PC-9 (cell line): ENCODE measurements at regions of chr3 and their contacts with region 1.

Region 1: GRCh38 chr3:182713743-182714517 is 79.4 kb upstream of the ATP11B start:
- DNase-seq: peak; percentile 24 to 86
- H3K4me3 ChIP-seq: no peak overlapping the region
- H3K27ac ChIP-seq: no peak overlapping the region
- H3K4me1 ChIP-seq: peaks cover 24% of the 10 kb centered on the region
- H3K27me3 ChIP-seq: no peaks in the 10 kb centered on the region
- CTCF ChIP-seq: peak; percentile 92

Region 2: DNA sequence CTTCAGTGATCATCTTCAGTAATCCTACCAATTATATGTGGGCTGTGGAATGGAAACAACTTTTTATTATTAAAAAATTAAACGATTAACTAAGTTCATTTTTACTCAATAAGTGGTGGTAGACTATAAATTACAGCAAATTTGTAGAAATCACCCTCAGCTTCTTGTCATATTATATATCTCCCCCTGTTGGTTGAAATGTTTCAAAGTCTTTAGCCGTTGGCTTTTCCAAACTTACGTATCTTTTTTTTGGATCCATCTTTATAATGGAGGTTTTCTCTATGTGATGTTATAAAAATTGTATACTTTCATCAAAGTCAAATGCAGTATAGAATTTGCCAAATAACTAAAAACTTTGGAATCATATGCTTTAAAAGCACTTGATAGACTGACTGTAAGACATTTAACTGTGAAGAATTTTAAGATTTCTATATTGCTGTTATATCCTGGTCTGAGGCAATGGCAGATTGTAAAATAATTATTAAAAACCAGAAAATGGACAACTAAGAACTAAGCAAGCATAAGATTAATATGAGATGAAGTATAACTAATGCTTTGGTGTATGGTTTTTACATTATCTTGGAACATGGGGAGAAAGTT is 124.0 kb after region 1 on chr3:
- CTCF ChIA-PET with region 1: interaction called, 18 read pairs
- POLR2A ChIA-PET with region 1: no interaction called
- intact Hi-C with region 1: loop called (anchors 1 kb)
- DNase-seq: peak in 1 of 2 experiments; percentile 42
- H3K4me3 ChIP-seq: no peak overlapping the region
- H3K27ac ChIP-seq: no peak overlapping the region
- H3K4me1 ChIP-seq: no peaks in the 10 kb centered on the region
- H3K27me3 ChIP-seq: no peaks in the 10 kb centered on the region
- CTCF ChIP-seq: peak; percentile 83

Region 3: GRCh38 chr3:183099026-183099837 is 385.3 kb after region 1 on chr3 and contains the start of gene MCCC1:
- CTCF ChIA-PET with region 1: no interaction called
- POLR2A ChIA-PET with region 1: interaction called, 10 read pairs
- intact Hi-C with region 1: loop called (anchors 10 kb)
- DNase-seq: peak; percentile 100
- H3K4me3 ChIP-seq: peak within 1 kb of the TSS; percentile 86
- H3K27ac ChIP-seq: peak within 1 kb of the TSS; percentile 52
- H3K4me1 ChIP-seq: peaks cover 26% of the 10 kb centered on the region
- H3K27me3 ChIP-seq: no peaks in the 10 kb centered on the region
- CTCF ChIP-seq: no peak
- total RNA-seq, gene MCCC1: 52.6 and 56.8 TPM in 2 replicates

Region 4: GRCh38 chr3:183239046-183239445 is 525.1 kb after region 1 on chr3:
- CTCF ChIA-PET with region 1: no interaction called
- POLR2A ChIA-PET with region 1: interaction called, 22 read pairs
- intact Hi-C with region 1: no loop called
- DNase-seq: no peak
- H3K4me3 ChIP-seq: no peak overlapping the region
- H3K27ac ChIP-seq: no peak overlapping the region
- H3K4me1 ChIP-seq: peaks cover under 1% of the 10 kb centered on the region; the same call in 1 of the 2 replicates
- H3K27me3 ChIP-seq: no peaks in the 10 kb centered on the region
- CTCF ChIP-seq: no peak